K562 (cell line): ENCODE measurements at regions of chr20 and their contacts with region 1.

Region 1: GRCh38 chr20:45373353-45374100 is 4.6 kb downstream of the TP53TG5 start:
- DNase-seq: peak; percentile 84 to 95 (median 88)
- ATAC-seq: peak; percentile 96
- H3K4me3 ChIP-seq: peak overlapping the region; percentile 41
- H3K27ac ChIP-seq: peak overlapping the region; percentile 74
- H3K4me1 ChIP-seq: peaks cover 7 to 15% of the 10 kb centered on the region in 2 experiments; a peak in 4 of 5 replicates
- H3K27me3 ChIP-seq: no peaks in the 10 kb centered on the region
- CTCF ChIP-seq: peak; percentile 95 to 97 (median 95)
- EP300 ChIP-seq: no peak; the same call in 1 of the 2 replicates
- POLR2A ChIP-seq: peak; percentile 64
- RAD21 ChIP-seq: peak; percentile 87 to 92

Region 2: DNA sequence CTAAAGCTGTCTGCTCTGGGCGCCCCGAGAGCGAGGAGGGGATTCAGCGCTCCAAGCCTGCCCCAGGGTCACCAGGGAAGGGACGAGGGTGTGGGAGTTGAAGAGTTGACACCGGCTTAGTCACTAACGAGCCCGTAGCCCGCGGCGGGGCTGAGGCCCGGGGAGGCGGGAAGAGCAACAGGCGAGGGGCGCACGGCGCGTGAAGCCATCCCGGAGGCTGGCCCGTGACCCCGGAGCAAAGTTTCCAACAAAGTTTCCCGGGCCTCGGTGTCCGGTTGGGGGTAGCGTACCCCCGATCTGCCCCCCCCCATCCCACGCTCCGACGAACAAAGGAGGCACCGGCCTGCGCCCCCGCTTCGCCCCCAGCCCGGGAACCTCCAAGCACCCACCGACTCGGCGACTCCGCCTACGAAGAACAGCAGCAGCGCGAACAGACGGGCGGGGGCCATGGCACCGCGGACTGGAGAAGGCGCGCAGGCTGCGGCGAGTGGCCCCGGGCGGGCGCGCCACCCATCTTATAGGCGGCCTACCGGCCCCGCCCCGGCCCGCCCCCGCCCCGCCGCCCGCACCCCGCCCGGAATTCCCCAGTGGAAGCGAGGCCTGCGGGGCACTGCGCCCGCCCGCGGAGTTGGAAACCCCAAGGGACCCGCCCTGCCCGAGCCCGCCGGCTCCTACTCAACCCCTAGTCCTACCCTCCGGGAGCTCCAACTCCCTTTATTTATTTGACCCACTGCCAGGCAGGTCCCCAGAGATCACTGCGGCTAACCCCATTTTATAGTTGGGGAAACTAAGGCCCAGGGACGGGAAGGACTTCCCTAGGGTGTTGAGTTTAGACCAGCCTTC is 25.4 kb before region 1 on chr20 and contains the start of gene SDC4:
- CTCF ChIA-PET with region 1: no interaction called
- POLR2A ChIA-PET with region 1: interaction called, 11 read pairs
- in situ Hi-C with region 1: no loop called
- intact Hi-C with region 1: no loop called
- DNase-seq: peak; percentile 76 to 87 (median 86)
- ATAC-seq: peak; percentile 84
- H3K4me3 ChIP-seq: peak within 1 kb of the TSS; percentile 54
- H3K27ac ChIP-seq: peak within 1 kb of the TSS; percentile 67
- H3K4me1 ChIP-seq: peaks cover 27 to 41% of the 10 kb centered on the region in 2 experiments
- H3K27me3 ChIP-seq: no peaks in the 10 kb centered on the region
- CTCF ChIP-seq: no peak
- EP300 ChIP-seq: no peak
- POLR2A ChIP-seq: peak; percentile 95
- RAD21 ChIP-seq: no peak
- polyA plus RNA-seq, gene SDC4: 2.1 to 4.2 TPM

Region 3: GRCh38 chr20:45415774-45416637 is 42.5 kb after region 1 on chr20 and contains the start of gene PIGT:
- CTCF ChIA-PET with region 1: no interaction called
- POLR2A ChIA-PET with region 1: interaction called, 5 read pairs
- in situ Hi-C with region 1: loop called (anchors 5 kb)
- intact Hi-C with region 1: no loop called
- DNase-seq: peak; percentile 76 to 93 (median 83)
- ATAC-seq: peak; percentile 99
- H3K4me3 ChIP-seq: peak within 1 kb of the TSS; percentile 85
- H3K27ac ChIP-seq: peak within 1 kb of the TSS; percentile 72
- H3K4me1 ChIP-seq: peaks cover 4 to 11% of the 10 kb centered on the region in 2 experiments; a peak in 2 of 5 replicates
- H3K27me3 ChIP-seq: no peaks in the 10 kb centered on the region
- CTCF ChIP-seq: no peak
- EP300 ChIP-seq: no peak
- POLR2A ChIP-seq: peak; percentile 96
- RAD21 ChIP-seq: no peak
- polyA plus RNA-seq, gene PIGT: 33.7 to 68.4 TPM

Region 4: GRCh38 chr20:45436732-45437391 is 63.3 kb after region 1 on chr20:
- CTCF ChIA-PET with region 1: interaction called, 17 read pairs
- POLR2A ChIA-PET with region 1: interaction called, 5 read pairs
- in situ Hi-C with region 1: loop called (anchors 5 kb)
- intact Hi-C with region 1: loop called (anchors 1 kb)
- DNase-seq: peak; percentile 87 to 88 (median 88)
- ATAC-seq: peak; percentile 100
- H3K4me3 ChIP-seq: peak overlapping the region; percentile 38
- H3K27ac ChIP-seq: no peak overlapping the region
- H3K4me1 ChIP-seq: peaks cover 3 to 6% of the 10 kb centered on the region in 2 experiments; a peak in 2 of 5 replicates
- H3K27me3 ChIP-seq: no peaks in the 10 kb centered on the region
- CTCF ChIP-seq: peak; percentile 94 to 96 (median 95)
- EP300 ChIP-seq: 0 out of 2 replicates have a peak, but pooled peaks have one; percentile 14
- POLR2A ChIP-seq: no peak
- RAD21 ChIP-seq: peak; percentile 92 to 97

Region 5: GRCh38 chr20:45592574-45593189 is 219.2 kb after region 1 on chr20:
- CTCF ChIA-PET with region 1: no interaction called
- POLR2A ChIA-PET with region 1: no interaction called
- in situ Hi-C with region 1: no loop called
- intact Hi-C with region 1: no loop called
- DNase-seq: peak; percentile 19 to 71 (median 40)
- ATAC-seq: peak; percentile 92
- H3K4me3 ChIP-seq: no peak overlapping the region
- H3K27ac ChIP-seq: no peak overlapping the region
- H3K4me1 ChIP-seq: no peaks in the 10 kb centered on the region
- H3K27me3 ChIP-seq: peaks cover 0 to 3% of the 10 kb centered on the region in 2 experiments; a peak in 1 of 5 replicates
- CTCF ChIP-seq: peak; percentile 87 to 99 (median 99)
- EP300 ChIP-seq: no peak
- POLR2A ChIP-seq: no peak
- RAD21 ChIP-seq: peak; percentile 79 to 83